Activated CD4-positive, alpha-beta T cell treated with anti-CD3 and anti-CD28 coated beads for 36 hours (primary cell): ENCODE measurements at regions of chr10 and their contacts with region 1.

Region 1: GRCh38 chr10:60099998-60100747 is 193.8 kb upstream of the CCDC6 start:
- DNase-seq: no peak
- ATAC-seq: no peak
- H3K4me3 Mint-ChIP-seq: no peak overlapping the region
- H3K27ac Mint-ChIP-seq: no peak overlapping the region
- H3K4me1 Mint-ChIP-seq: no peaks in the 10 kb centered on the region
- H3K27me3 Mint-ChIP-seq: no peaks in the 10 kb centered on the region

Region 2: GRCh38 chr10:60114765-60115586 is 14.8 kb after region 1 on chr10:
- CTCF ChIA-PET with region 1: interaction called, 10 read pairs
- POLR2A ChIA-PET with region 1: no interaction called
- intact Hi-C with region 1: no loop called
- DNase-seq: peak; percentile 16
- ATAC-seq: peak; percentile 60
- H3K4me3 Mint-ChIP-seq: no peak overlapping the region
- H3K27ac Mint-ChIP-seq: no peak overlapping the region
- H3K4me1 Mint-ChIP-seq: no peaks in the 10 kb centered on the region
- H3K27me3 Mint-ChIP-seq: no peaks in the 10 kb centered on the region

Region 3: GRCh38 chr10:60208676-60209269 is 108.6 kb after region 1 on chr10:
- CTCF ChIA-PET with region 1: interaction called, 4 read pairs
- POLR2A ChIA-PET with region 1: no interaction called
- intact Hi-C with region 1: loop called (anchors 1 to 5 kb)
- DNase-seq: no peak
- ATAC-seq: no peak
- H3K4me3 Mint-ChIP-seq: no peak overlapping the region
- H3K27ac Mint-ChIP-seq: no peak overlapping the region
- H3K4me1 Mint-ChIP-seq: peaks cover 15% of the 10 kb centered on the region
- H3K27me3 Mint-ChIP-seq: no peaks in the 10 kb centered on the region

Region 4: DNA sequence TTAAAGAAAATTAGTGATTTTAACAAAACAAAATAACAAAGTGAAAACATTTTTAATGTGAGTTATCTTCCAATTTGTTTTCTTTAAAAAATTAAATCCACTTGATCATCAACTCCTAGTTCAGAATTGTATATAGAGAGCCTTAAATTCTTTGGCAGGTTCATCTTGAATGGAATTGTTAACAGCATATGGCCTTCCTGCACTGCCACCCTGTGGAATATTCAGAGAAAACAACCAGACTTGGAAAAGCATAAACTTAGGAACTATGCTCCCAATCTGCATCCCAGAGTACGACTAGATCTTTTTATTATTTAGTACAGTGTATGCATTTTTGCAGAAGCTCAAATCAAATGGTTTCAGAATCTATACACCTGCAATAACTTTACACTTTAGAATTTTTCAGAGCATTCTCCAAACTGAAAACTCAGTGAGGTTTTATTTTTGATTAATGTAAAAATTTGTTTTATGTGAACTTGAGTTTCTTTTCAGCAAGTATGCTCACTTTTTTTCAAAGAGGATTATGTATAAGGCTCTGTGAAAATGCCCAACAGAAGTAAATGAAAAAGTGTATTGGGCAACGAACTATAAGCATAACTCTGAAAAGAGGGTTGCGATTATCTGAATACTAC is 334.4 kb after region 1 on chr10:
- CTCF ChIA-PET with region 1: interaction called, 6 read pairs
- POLR2A ChIA-PET with region 1: interaction called, 3 read pairs
- intact Hi-C with region 1: loop called (anchors 1 to 2 kb)
- DNase-seq: peak; percentile 17
- ATAC-seq: no peak
- H3K4me3 Mint-ChIP-seq: no peak overlapping the region
- H3K27ac Mint-ChIP-seq: no peak overlapping the region
- H3K4me1 Mint-ChIP-seq: peaks cover 6% of the 10 kb centered on the region
- H3K27me3 Mint-ChIP-seq: no peaks in the 10 kb centered on the region

Region 5: DNA sequence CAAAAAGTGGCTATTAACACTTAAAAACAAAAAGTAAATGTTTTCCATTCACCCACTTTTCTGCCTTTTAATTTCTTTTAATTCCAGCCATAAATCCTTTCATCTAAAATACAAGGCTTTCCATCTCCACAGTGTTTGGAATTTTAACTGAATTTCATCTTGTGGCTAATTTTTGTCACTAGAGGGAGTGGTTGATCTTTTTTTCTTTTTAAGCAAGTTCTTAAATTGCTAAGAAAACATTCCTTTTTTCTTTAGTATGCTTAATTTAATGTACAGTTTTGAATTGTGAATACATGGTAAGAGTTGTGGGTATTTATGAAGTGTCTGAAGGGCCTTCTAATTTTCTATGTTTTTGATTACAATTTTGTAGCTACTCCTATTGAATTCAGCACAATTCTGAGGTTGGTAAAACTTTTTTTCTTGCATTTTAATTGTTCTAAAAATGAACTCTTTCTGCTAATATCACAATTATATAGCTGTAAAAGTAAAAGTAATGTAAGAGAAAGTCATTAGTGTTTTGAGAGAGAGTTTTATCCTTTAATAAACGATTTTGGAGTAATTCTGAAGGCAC is 344.4 kb after region 1 on chr10:
- CTCF ChIA-PET with region 1: interaction called, 6 read pairs
- POLR2A ChIA-PET with region 1: no interaction called
- intact Hi-C with region 1: loop called in 1 of 2 experiments (anchors 1 kb)
- DNase-seq: no peak
- ATAC-seq: no peak
- H3K4me3 Mint-ChIP-seq: no peak overlapping the region
- H3K27ac Mint-ChIP-seq: no peak overlapping the region
- H3K4me1 Mint-ChIP-seq: peaks cover 29% of the 10 kb centered on the region
- H3K27me3 Mint-ChIP-seq: no peaks in the 10 kb centered on the region

Region 6: GRCh38 chr10:60769406-60769805 is 669.2 kb after region 1 on chr10:
- CTCF ChIA-PET with region 1: no interaction called
- POLR2A ChIA-PET with region 1: no interaction called
- intact Hi-C with region 1: loop called in 1 of 2 experiments (anchors 5 kb)
- DNase-seq: no peak
- ATAC-seq: no peak
- H3K4me3 Mint-ChIP-seq: no peak overlapping the region
- H3K27ac Mint-ChIP-seq: no peak overlapping the region
- H3K4me1 Mint-ChIP-seq: peaks cover 13% of the 10 kb centered on the region
- H3K27me3 Mint-ChIP-seq: no peaks in the 10 kb centered on the region

Region 7: DNA sequence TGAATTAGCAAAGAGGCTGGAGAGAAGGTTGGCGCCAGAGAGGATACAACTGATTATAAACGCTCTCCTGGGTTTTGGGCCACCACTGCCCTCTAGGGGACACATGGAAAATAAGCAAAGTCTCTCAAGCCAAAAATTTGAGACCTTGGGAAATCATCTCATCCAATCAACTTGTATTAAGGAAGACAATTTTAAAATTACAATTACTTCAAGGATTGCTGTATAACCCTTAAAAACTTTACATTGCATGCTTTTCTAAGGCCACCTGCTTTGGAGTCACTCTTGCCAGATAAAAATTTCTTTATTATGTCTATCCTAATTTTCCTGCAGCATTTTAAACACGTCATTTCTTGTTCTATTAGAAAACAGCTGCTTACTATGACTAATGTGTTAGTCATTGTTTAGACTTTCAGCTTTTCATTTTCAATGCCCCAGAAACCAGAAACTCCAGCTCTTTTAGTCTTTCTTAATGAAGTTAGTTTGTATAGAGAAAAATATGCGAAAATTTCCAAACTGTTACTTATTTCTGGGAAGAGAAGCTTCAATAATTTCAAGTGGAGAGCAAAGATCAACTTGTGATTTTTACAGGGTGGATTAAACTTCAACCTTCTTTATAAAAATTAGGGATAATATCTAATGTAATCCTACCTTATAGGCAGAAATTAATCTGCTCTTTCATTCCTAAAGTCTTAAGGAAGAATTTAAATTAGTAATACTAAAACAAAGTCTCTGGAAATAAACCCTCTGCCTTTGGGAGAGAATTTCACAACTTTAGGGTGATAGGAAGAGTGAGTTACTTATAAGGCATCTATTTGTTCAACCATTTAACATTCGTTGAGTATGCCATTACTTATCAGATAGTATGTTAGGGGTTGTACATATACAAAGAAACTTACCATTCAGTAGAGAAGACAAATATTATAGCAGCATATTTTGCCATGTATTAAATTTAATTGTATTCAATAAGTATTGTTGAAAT is 864.4 kb after region 1 on chr10:
- CTCF ChIA-PET with region 1: no interaction called
- POLR2A ChIA-PET with region 1: no interaction called
- intact Hi-C with region 1: loop called in 1 of 2 experiments (anchors 10 kb)
- DNase-seq: peak; percentile 70
- ATAC-seq: peak; percentile 69
- H3K4me3 Mint-ChIP-seq: no peak overlapping the region
- H3K27ac Mint-ChIP-seq: no peak overlapping the region
- H3K4me1 Mint-ChIP-seq: peaks cover 32% of the 10 kb centered on the region
- H3K27me3 Mint-ChIP-seq: peaks cover 11% of the 10 kb centered on the region